ENCODE measurements at regions of chr1 and their contacts with region 1.

Region 1: DNA sequence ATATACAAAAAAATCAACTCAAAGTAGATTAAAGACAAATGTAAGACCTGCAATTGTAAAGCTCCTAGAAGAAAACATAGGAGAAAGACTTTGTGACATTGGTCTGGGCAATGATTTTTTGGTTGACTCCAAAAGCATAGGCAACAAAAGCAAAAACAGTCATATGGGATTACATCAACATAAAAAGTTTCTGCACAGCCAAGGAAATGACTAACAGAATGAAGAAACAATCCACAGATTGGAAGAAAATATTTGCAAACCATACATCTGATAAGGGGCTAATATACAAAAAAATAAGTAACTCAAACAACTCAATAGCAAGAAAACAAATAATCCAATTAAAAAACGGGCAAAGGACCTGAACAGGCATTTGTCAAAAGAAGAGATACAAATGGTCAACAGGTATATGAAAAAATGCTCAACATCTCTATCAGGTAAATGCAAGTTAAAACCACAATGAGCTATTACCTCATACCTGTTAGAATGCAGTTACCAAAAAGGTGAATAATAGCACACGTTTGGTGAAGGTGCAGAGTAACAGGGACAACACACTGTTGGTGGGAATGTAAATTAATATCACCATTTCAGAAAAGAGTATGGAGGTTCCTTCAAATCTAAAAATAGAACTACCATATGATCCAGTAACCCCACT is 173.7 kb upstream of the COA6 start:
- DNase-seq: no peak
- H3K4me3 Mint-ChIP-seq: no peak overlapping the region
- H3K27ac Mint-ChIP-seq: no peak overlapping the region
- H3K4me1 Mint-ChIP-seq: no peaks in the 10 kb centered on the region
- H3K27me3 Mint-ChIP-seq: peaks cover 33% of the 10 kb centered on the region

Region 2: GRCh38 chr1:234163267-234163919 is 36.2 kb before region 1 on chr1:
- intact Hi-C with region 1: loop called (anchors 5 kb)
- DNase-seq: no peak
- H3K4me3 Mint-ChIP-seq: no peak overlapping the region
- H3K27ac Mint-ChIP-seq: no peak overlapping the region
- H3K4me1 Mint-ChIP-seq: peaks cover 25% of the 10 kb centered on the region
- H3K27me3 Mint-ChIP-seq: peaks cover 10% of the 10 kb centered on the region

Measured in activated CD4-positive, alpha-beta T cell treated with anti-CD3 and anti-CD28 coated beads, Interleukin-2, amount 10 ng/mL, durations not matched to agents 24 days and 14 days (primary cell).